GM12878 (cell line): ENCODE measurements at regions of chr11 and their contacts with region 1.

Region 1: GRCh38 chr11:70202898-70203748 is at the start of gene FADD:
- DNase-seq: peak; percentile 83
- ATAC-seq: peak; percentile 87
- H3K4me3 ChIP-seq: peak within 1 kb of the TSS; percentile 82
- H3K27ac ChIP-seq: peak within 1 kb of the TSS; percentile 88
- H3K4me1 ChIP-seq: peaks cover 12% of the 10 kb centered on the region
- H3K27me3 ChIP-seq: no peaks in the 10 kb centered on the region
- CTCF ChIP-seq: no peak
- EP300 ChIP-seq: peak in 1 of 2 experiments; percentile 78; a peak in 2 of 4 replicates
- POLR2A ChIP-seq: peak; percentile 95
- RAD21 ChIP-seq: no peak
- polyA plus RNA-seq, gene FADD: 0.32 to 0.88 TPM

Region 2: DNA sequence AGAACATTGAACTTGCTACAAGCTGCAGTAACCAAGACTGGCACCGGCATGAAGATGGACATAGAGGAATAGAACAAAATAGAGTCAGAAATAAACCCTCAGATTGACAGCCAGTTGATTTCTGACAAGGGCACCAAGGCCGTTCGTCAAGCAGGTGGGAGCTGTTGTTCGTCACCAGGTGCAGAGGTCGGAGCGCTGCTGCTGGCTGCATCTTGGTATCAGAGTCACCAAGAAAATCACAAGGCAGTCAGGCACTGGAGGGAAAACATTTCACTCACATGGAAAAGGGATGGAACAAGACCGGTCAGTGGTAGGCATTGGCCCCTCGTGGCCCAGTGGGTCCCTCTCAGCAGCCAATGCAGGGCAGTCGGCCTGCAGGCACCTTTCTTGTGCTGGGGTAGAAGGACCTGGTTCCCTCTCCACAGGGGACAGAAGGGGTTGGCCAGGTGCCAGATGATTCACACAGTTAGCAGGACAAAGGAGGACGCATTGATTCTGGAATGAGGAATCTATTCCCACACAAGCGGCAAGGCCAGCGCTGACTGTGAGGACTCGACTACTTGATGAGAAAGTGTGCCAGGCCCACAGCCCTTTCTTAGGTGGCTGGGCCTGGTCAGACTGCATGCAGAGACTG is 268.1 kb before region 1 on chr11:
- CTCF ChIA-PET with region 1: no interaction called
- POLR2A ChIA-PET with region 1: no interaction called
- RAD21 ChIA-PET with region 1: no interaction called
- SMC1A ChIA-PET with region 1: no interaction called
- in situ Hi-C with region 1: no loop called
- intact Hi-C with region 1: no loop called
- DNase-seq: no peak
- ATAC-seq: no peak
- H3K4me3 ChIP-seq: no peak overlapping the region
- H3K27ac ChIP-seq: no peak overlapping the region
- H3K4me1 ChIP-seq: no peaks in the 10 kb centered on the region
- H3K27me3 ChIP-seq: peaks cover 0 to 4% of the 10 kb centered on the region in 2 experiments; a peak in 2 of 4 replicates
- CTCF ChIP-seq: no peak
- EP300 ChIP-seq: no peak
- POLR2A ChIP-seq: no peak
- RAD21 ChIP-seq: no peak

Region 3: DNA sequence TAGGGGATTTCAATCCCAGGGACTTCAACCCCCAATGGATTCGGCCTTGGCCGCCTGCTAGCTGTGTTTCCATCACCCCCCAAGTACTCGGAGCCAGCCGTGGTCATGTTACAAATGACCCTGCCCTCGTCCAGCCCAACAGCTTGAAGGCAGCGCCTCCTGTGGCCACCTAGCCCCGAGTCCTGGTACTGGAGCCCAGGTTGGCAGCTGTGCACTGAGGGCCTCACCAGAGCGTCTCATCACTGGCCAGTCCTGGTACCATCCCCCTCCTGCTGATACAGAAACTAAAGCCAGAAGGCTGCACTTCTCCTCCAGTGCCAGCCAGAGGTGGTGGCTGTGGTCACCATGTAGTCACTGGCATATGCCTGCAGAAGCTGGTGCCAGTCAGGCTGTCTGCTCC is 44.9 kb before region 1 on chr11:
- CTCF ChIA-PET with region 1: no interaction called
- POLR2A ChIA-PET with region 1: no interaction called
- RAD21 ChIA-PET with region 1: no interaction called
- SMC1A ChIA-PET with region 1: no interaction called
- in situ Hi-C with region 1: no loop called
- intact Hi-C with region 1: no loop called
- DNase-seq: no peak
- ATAC-seq: peak; percentile 67
- H3K4me3 ChIP-seq: no peak overlapping the region
- H3K27ac ChIP-seq: no peak overlapping the region
- H3K4me1 ChIP-seq: no peaks in the 10 kb centered on the region
- H3K27me3 ChIP-seq: no peaks in the 10 kb centered on the region
- CTCF ChIP-seq: peak in 1 of 3 experiments; percentile 32; a peak in 2 of 6 replicates
- EP300 ChIP-seq: no peak
- POLR2A ChIP-seq: no peak
- RAD21 ChIP-seq: peak; percentile 12; the same call in 1 of the 2 replicates

Region 4: GRCh38 chr11:70176940-70177689 is 26.0 kb before region 1 on chr11:
- CTCF ChIA-PET with region 1: no interaction called
- POLR2A ChIA-PET with region 1: no interaction called
- RAD21 ChIA-PET with region 1: no interaction called
- SMC1A ChIA-PET with region 1: no interaction called
- in situ Hi-C with region 1: no loop called
- intact Hi-C with region 1: no loop called
- DNase-seq: no peak
- ATAC-seq: peak; percentile 83
- H3K4me3 ChIP-seq: no peak overlapping the region
- H3K27ac ChIP-seq: no peak overlapping the region
- H3K4me1 ChIP-seq: no peaks in the 10 kb centered on the region
- H3K27me3 ChIP-seq: no peaks in the 10 kb centered on the region
- CTCF ChIP-seq: peak; percentile 52 to 80 (median 65)
- EP300 ChIP-seq: no peak
- POLR2A ChIP-seq: no peak
- RAD21 ChIP-seq: 0 out of 2 replicates have a peak, but pooled peaks have one; percentile 3

Region 5: GRCh38 chr11:70270104-70270876 is 67.2 kb after region 1 on chr11 and contains the start of gene PPFIA1:
- CTCF ChIA-PET with region 1: interaction called, 8 read pairs
- POLR2A ChIA-PET with region 1: interaction called, 3 read pairs
- RAD21 ChIA-PET with region 1: no interaction called
- SMC1A ChIA-PET with region 1: no interaction called
- in situ Hi-C with region 1: no loop called
- intact Hi-C with region 1: loop called (anchors 5 kb)
- DNase-seq: peak; percentile 67
- ATAC-seq: peak; percentile 95
- H3K4me3 ChIP-seq: peak within 1 kb of the TSS; percentile 83
- H3K27ac ChIP-seq: peak within 1 kb of the TSS; percentile 65
- H3K4me1 ChIP-seq: peaks cover 13% of the 10 kb centered on the region; the same call in 1 of the 2 replicates
- H3K27me3 ChIP-seq: no peaks in the 10 kb centered on the region
- CTCF ChIP-seq: peak in 2 of 3 experiments; percentile 12 to 15; a peak in 3 of 6 replicates
- EP300 ChIP-seq: no peak
- POLR2A ChIP-seq: peak; percentile 83
- RAD21 ChIP-seq: no peak
- polyA plus RNA-seq, gene PPFIA1: 5.2 to 7.1 TPM

Region 6: GRCh38 chr11:70326365-70326811 is 123.3 kb after region 1 on chr11:
- CTCF ChIA-PET with region 1: no interaction called
- POLR2A ChIA-PET with region 1: no interaction called
- RAD21 ChIA-PET with region 1: no interaction called
- SMC1A ChIA-PET with region 1: no interaction called
- in situ Hi-C with region 1: no loop called
- intact Hi-C with region 1: loop called (anchors 10 kb)
- DNase-seq: no peak
- ATAC-seq: no peak
- H3K4me3 ChIP-seq: no peak overlapping the region
- H3K27ac ChIP-seq: no peak overlapping the region
- H3K4me1 ChIP-seq: peaks cover 25% of the 10 kb centered on the region
- H3K27me3 ChIP-seq: no peaks in the 10 kb centered on the region
- CTCF ChIP-seq: no peak
- EP300 ChIP-seq: no peak
- POLR2A ChIP-seq: no peak
- RAD21 ChIP-seq: no peak